PC-3 (cell line): ENCODE measurements at regions of chr1 and their contacts with region 1.

Region 1: GRCh38 chr1:172269644-172270043 is 150.8 kb upstream of the C1orf105 start:
- DNase-seq: no peak
- ATAC-seq: no peak
- H3K4me3 ChIP-seq: no peak overlapping the region
- H3K27ac ChIP-seq: no peak overlapping the region
- H3K4me1 ChIP-seq: peaks cover 19% of the 10 kb centered on the region
- H3K27me3 ChIP-seq: no peaks in the 10 kb centered on the region
- CTCF ChIP-seq: no peak

Region 2: GRCh38 chr1:172089768-172090510 is 179.7 kb before region 1 on chr1:
- CTCF ChIA-PET with region 1: no interaction called
- POLR2A ChIA-PET with region 1: no interaction called
- intact Hi-C with region 1: loop called (anchors 5 kb)
- DNase-seq: peak; percentile 94
- ATAC-seq: peak; percentile 100
- H3K4me3 ChIP-seq: peak overlapping the region; percentile 10; the same call in 1 of the 2 replicates
- H3K27ac ChIP-seq: no peak overlapping the region
- H3K4me1 ChIP-seq: no peaks in the 10 kb centered on the region
- H3K27me3 ChIP-seq: no peaks in the 10 kb centered on the region
- CTCF ChIP-seq: peak; percentile 100

Region 3: GRCh38 chr1:172254521-172255222 is 15.0 kb before region 1 on chr1:
- CTCF ChIA-PET with region 1: no interaction called
- POLR2A ChIA-PET with region 1: interaction called, 3 read pairs
- intact Hi-C with region 1: loop called (anchors 1 kb)
- DNase-seq: peak; percentile 98
- ATAC-seq: peak; percentile 96
- H3K4me3 ChIP-seq: peak overlapping the region; percentile 0; the same call in 1 of the 2 replicates
- H3K27ac ChIP-seq: peak overlapping the region; percentile 53
- H3K4me1 ChIP-seq: peaks cover 23% of the 10 kb centered on the region
- H3K27me3 ChIP-seq: no peaks in the 10 kb centered on the region
- CTCF ChIP-seq: no peak